ENCODE measurements at regions of chrX and their contacts with region 1.

Region 1: GRCh38 chrX:124530803-124531202 is 184.4 kb downstream of the SH2D1A start:
- DNase-seq: no peak
- ATAC-seq: no peak
- H3K4me3 ChIP-seq: no peak overlapping the region
- H3K27ac ChIP-seq: no peak overlapping the region
- H3K4me1 ChIP-seq: no peaks in the 10 kb centered on the region
- H3K27me3 ChIP-seq: no peaks in the 10 kb centered on the region

Region 2: DNA sequence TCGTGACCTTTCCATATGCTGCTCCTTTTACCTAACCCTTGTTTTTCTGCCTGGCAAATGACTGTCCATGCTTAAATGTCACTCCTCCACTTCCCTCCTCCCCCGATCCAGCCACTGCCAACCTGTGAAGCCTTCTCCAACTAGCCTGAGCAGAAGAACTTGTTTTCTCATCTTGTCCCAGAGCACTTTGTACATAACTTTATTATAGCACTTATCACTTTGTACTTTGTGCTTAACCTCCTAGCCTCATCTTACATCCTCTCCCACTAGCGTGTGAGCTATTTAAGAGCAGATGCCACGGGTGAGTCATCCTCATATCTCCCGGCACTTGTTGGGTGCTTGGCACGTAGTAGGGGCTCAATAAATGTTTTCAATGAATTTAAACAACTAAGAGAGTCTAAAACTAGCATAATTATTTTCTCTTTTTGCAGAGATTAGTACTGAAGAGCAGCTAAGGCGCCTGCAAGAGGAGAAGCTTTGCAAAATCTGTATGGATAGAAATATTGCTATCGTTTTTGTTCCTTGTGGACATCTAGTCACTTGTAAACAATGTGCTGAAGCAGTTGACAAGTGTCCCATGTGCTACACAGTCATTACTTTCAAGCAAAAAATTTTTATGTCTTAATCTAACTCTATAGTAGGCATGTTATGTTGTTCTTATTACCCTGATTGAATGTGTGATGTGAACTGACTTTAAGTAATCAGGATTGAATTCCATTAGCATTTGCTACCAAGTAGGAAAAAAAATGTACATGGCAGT is 624.1 kb before region 1 on chrX:
- intact Hi-C with region 1: no loop called
- DNase-seq: no peak
- ATAC-seq: no peak
- H3K4me3 ChIP-seq: no peak overlapping the region
- H3K27ac ChIP-seq: no peak overlapping the region
- H3K4me1 ChIP-seq: peaks cover 0 to 3% of the 10 kb centered on the region in 2 donors
- H3K27me3 ChIP-seq: no peaks in the 10 kb centered on the region

Region 3: GRCh38 chrX:124594017-124594651 is 63.3 kb after region 1 on chrX:
- intact Hi-C with region 1: loop called in 1 of 2 experiments (anchors 10 kb)
- DNase-seq: no peak
- ATAC-seq: no peak
- H3K4me3 ChIP-seq: no peak overlapping the region
- H3K27ac ChIP-seq: no peak overlapping the region
- H3K4me1 ChIP-seq: no peaks in the 10 kb centered on the region
- H3K27me3 ChIP-seq: no peaks in the 10 kb centered on the region

Region 4: DNA sequence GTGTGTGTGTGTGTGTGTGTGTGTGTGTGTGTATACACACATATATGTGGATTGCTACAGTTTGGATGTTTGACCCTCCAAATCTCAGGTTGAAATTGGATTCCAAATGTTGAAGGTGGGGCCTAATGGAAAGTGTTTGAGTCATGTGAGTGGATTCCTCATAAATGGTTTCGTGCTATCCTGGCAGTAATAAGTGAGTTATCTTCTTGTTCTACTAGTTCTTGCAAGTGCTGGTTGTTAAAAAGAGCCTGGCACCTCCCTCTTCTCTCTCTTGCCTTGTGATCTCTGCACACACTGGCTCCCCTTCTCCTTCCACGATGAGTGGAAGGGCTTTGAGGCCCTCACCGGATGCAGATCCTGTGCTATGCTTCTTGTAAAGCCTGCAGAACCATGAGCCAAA is 159.7 kb after region 1 on chrX:
- intact Hi-C with region 1: no loop called
- DNase-seq: no peak
- ATAC-seq: no peak
- H3K4me3 ChIP-seq: no peak overlapping the region
- H3K27ac ChIP-seq: no peak overlapping the region
- H3K4me1 ChIP-seq: no peaks in the 10 kb centered on the region
- H3K27me3 ChIP-seq: no peaks in the 10 kb centered on the region

Measured in aorta (tissue), 5 donors.